GM12878 (cell line): ENCODE measurements at regions of chr1 and their contacts with region 1.

Region 1: GRCh38 chr1:174883409-174883808 is 116.3 kb upstream of the CACYBP start:
- DNase-seq: no peak
- ATAC-seq: peak; percentile 43; the same call in 2 of the 3 replicates
- H3K4me3 ChIP-seq: no peak overlapping the region
- H3K27ac ChIP-seq: no peak overlapping the region
- H3K4me1 ChIP-seq: no peaks in the 10 kb centered on the region
- H3K27me3 ChIP-seq: no peaks in the 10 kb centered on the region
- CTCF ChIP-seq: peak in 2 of 3 experiments; percentile 10 to 46; a peak in 2 of 6 replicates
- EP300 ChIP-seq: no peak
- POLR2A ChIP-seq: no peak
- RAD21 ChIP-seq: peak; percentile 44; the same call in 1 of the 2 replicates

Region 2: GRCh38 chr1:174639461-174639860 is 243.9 kb before region 1 on chr1:
- CTCF ChIA-PET with region 1: no interaction called
- POLR2A ChIA-PET with region 1: no interaction called
- RAD21 ChIA-PET with region 1: no interaction called
- SMC1A ChIA-PET with region 1: no interaction called
- in situ Hi-C with region 1: no loop called
- intact Hi-C with region 1: no loop called
- DNase-seq: no peak
- ATAC-seq: no peak
- H3K4me3 ChIP-seq: no peak overlapping the region
- H3K27ac ChIP-seq: no peak overlapping the region
- H3K4me1 ChIP-seq: no peaks in the 10 kb centered on the region
- H3K27me3 ChIP-seq: no peaks in the 10 kb centered on the region
- CTCF ChIP-seq: no peak
- EP300 ChIP-seq: no peak
- POLR2A ChIP-seq: no peak
- RAD21 ChIP-seq: no peak

Region 3: DNA sequence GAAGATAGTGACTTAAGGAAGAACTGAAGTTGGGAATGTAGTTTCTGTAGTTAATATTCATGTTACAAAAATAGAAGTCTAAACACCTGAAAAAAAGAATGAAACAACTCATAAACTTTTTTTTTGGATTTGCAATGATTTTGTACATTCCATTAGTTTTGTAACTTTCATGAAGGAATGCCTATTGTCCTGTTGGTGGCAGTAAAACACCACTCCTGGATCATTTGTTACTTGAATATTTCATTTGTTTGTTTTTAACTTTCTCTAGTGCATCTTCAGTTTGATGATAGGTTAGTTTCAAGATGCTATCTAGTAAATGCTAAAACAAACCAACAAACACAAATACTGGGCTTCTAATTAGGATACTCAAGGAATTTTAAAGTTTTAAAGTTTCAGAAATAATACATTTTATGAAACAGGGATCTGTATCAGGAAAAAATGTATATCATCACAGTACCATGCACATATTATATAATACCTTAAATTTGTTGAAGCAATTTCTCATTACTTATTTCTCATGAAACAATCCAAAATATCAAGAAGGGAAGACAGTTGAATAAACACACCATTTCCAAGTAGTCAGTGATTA is 113.4 kb before region 1 on chr1:
- CTCF ChIA-PET with region 1: no interaction called
- POLR2A ChIA-PET with region 1: no interaction called
- RAD21 ChIA-PET with region 1: no interaction called
- SMC1A ChIA-PET with region 1: no interaction called
- in situ Hi-C with region 1: no loop called
- intact Hi-C with region 1: loop called (anchors 5 kb)
- DNase-seq: peak; percentile 17
- ATAC-seq: peak; percentile 71
- H3K4me3 ChIP-seq: no peak overlapping the region
- H3K27ac ChIP-seq: no peak overlapping the region
- H3K4me1 ChIP-seq: no peaks in the 10 kb centered on the region
- H3K27me3 ChIP-seq: no peaks in the 10 kb centered on the region
- CTCF ChIP-seq: peak; percentile 54 to 80 (median 61)
- EP300 ChIP-seq: no peak
- POLR2A ChIP-seq: no peak
- RAD21 ChIP-seq: peak; percentile 82

Region 4: DNA sequence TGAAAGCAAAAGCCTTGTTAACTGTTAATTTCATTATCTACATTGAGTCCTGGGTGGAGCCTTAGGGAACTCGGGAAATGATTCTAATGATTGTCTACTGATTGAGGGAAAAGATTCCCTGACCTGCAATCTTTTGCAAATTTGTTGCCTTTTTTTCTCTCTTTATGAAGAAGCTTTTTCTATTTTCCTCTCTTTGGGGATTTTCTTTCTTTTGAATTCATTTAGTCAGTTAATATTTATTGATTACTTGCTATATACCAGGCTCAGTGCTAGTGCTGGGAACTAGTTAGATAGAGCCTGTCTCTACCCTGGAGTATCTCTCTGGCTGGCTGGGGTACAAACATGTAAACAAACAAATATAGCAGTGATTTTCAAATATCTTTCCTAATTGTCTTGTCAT is 45.1 kb after region 1 on chr1:
- CTCF ChIA-PET with region 1: interaction called, 3 read pairs
- POLR2A ChIA-PET with region 1: no interaction called
- RAD21 ChIA-PET with region 1: no interaction called
- SMC1A ChIA-PET with region 1: no interaction called
- in situ Hi-C with region 1: no loop called
- intact Hi-C with region 1: loop called (anchors 5 kb)
- DNase-seq: no peak
- ATAC-seq: no peak
- H3K4me3 ChIP-seq: no peak overlapping the region
- H3K27ac ChIP-seq: no peak overlapping the region
- H3K4me1 ChIP-seq: no peaks in the 10 kb centered on the region
- H3K27me3 ChIP-seq: no peaks in the 10 kb centered on the region
- CTCF ChIP-seq: no peak
- EP300 ChIP-seq: no peak
- POLR2A ChIP-seq: no peak
- RAD21 ChIP-seq: no peak

Region 5: DNA sequence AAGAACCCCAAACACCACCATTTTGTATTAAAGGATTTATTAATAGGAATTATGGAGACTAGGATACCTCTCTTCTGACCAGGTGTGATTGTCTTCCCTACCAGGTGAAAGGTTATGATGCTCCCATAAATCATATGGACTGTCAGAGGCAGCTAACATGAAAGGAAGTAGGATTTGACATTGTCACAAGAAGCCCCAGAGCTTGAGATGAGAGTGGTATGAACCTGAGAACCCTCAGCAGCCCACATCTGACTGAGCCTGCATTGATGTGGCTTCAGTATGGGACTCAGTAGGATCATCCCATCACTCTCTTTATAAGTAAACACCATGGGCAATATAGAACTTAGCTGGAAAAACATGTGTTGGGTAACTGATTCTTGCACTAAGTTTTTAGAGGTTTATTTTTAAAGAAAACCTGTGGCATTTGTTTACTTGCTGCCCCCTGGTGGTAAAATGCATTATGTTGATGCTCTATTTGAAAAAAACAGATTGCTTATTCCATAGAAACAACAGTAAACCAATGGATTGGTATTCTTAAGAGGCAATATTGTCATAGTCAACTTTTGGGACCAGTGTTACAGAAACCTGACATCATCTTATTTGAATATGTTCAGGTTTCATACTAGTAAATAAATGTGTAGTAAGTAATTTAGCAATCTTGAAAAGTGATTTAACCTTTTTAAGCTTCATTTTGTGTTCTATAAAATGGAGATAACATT is 99.7 kb after region 1 on chr1:
- CTCF ChIA-PET with region 1: interaction called, 11 read pairs
- POLR2A ChIA-PET with region 1: no interaction called
- RAD21 ChIA-PET with region 1: interaction called, 14 read pairs
- SMC1A ChIA-PET with region 1: interaction called, 11 read pairs
- in situ Hi-C with region 1: no loop called
- intact Hi-C with region 1: no loop called
- DNase-seq: no peak
- ATAC-seq: no peak
- H3K4me3 ChIP-seq: no peak overlapping the region
- H3K27ac ChIP-seq: no peak overlapping the region
- H3K4me1 ChIP-seq: no peaks in the 10 kb centered on the region
- H3K27me3 ChIP-seq: no peaks in the 10 kb centered on the region
- CTCF ChIP-seq: peak; percentile 44 to 49 (median 49); a peak in 5 of 6 replicates
- EP300 ChIP-seq: no peak
- POLR2A ChIP-seq: no peak
- RAD21 ChIP-seq: peak; percentile 58

Region 6: GRCh38 chr1:174990382-174990999 is 107.1 kb after region 1 on chr1:
- CTCF ChIA-PET with region 1: interaction called, 8 read pairs
- POLR2A ChIA-PET with region 1: no interaction called
- RAD21 ChIA-PET with region 1: interaction called, 8 read pairs
- SMC1A ChIA-PET with region 1: interaction called, 11 read pairs
- in situ Hi-C with region 1: no loop called
- intact Hi-C with region 1: no loop called
- DNase-seq: no peak
- ATAC-seq: peak; percentile 75
- H3K4me3 ChIP-seq: peak overlapping the region; percentile 50
- H3K27ac ChIP-seq: peak overlapping the region; percentile 73
- H3K4me1 ChIP-seq: peaks cover 17% of the 10 kb centered on the region
- H3K27me3 ChIP-seq: no peaks in the 10 kb centered on the region
- CTCF ChIP-seq: no peak
- EP300 ChIP-seq: no peak
- POLR2A ChIP-seq: no peak
- RAD21 ChIP-seq: no peak

Region 7: GRCh38 chr1:175129997-175130648 is 246.7 kb after region 1 on chr1:
- CTCF ChIA-PET with region 1: interaction called, 3 read pairs
- POLR2A ChIA-PET with region 1: no interaction called
- RAD21 ChIA-PET with region 1: no interaction called
- SMC1A ChIA-PET with region 1: interaction called, 3 read pairs
- in situ Hi-C with region 1: no loop called
- intact Hi-C with region 1: loop called (anchors 10 kb)
- DNase-seq: no peak
- ATAC-seq: no peak; the same call in 2 of the 3 replicates
- H3K4me3 ChIP-seq: no peak overlapping the region
- H3K27ac ChIP-seq: no peak overlapping the region
- H3K4me1 ChIP-seq: peaks cover 28% of the 10 kb centered on the region
- H3K27me3 ChIP-seq: no peaks in the 10 kb centered on the region
- CTCF ChIP-seq: no peak
- EP300 ChIP-seq: no peak
- POLR2A ChIP-seq: no peak
- RAD21 ChIP-seq: no peak